WTC11 (cell line): ENCODE measurements at regions of chr15 and their contacts with region 1.

Region 1: GRCh38 chr15:63504247-63504978 is at the start of gene USP3:
- DNase-seq: peak; percentile 92
- ATAC-seq: peak; percentile 68
- H3K4me3 Mint-ChIP-seq: peak within 1 kb of the TSS; percentile 76
- H3K27ac Mint-ChIP-seq: no peak within 1 kb of the TSS
- H3K4me1 Mint-ChIP-seq: peaks cover 76% of the 10 kb centered on the region
- H3K27me3 Mint-ChIP-seq: peaks cover 36% of the 10 kb centered on the region
- CTCF ChIP-seq: no peak
- total RNA-seq, gene USP3: 30.0 to 36.6 TPM (median 30.8 TPM) in 3 replicates

Region 2: GRCh38 chr15:63517614-63518013 is 13.2 kb after region 1 on chr15:
- CTCF ChIA-PET with region 1: interaction called, 10 read pairs
- POLR2A ChIA-PET with region 1: no interaction called
- DNase-seq: no peak
- ATAC-seq: peak; percentile 87
- H3K4me3 Mint-ChIP-seq: no peak overlapping the region
- H3K27ac Mint-ChIP-seq: no peak overlapping the region
- H3K4me1 Mint-ChIP-seq: peaks cover 49% of the 10 kb centered on the region
- H3K27me3 Mint-ChIP-seq: no peaks in the 10 kb centered on the region
- CTCF ChIP-seq: no peak